Mammary epithelial cell (primary cell): ENCODE measurements at regions of chr22 and their contacts with region 1.

Region 1: GRCh38 chr22:29408945-29409344 is 20.6 kb upstream of the AP1B1 start:
- DNase-seq: no peak
- H3K4me3 ChIP-seq: no peak overlapping the region
- H3K27ac ChIP-seq: no peak overlapping the region
- H3K4me1 ChIP-seq: no peaks in the 10 kb centered on the region
- H3K27me3 ChIP-seq: peaks cover 3% of the 10 kb centered on the region
- CTCF ChIP-seq: no peak

Region 2: GRCh38 chr22:29469755-29470154 is 60.8 kb after region 1 on chr22:
- CTCF ChIA-PET with region 1: no interaction called
- dilution Hi-C with region 1: loop called (anchors 5 kb)
- in situ Hi-C with region 1: no loop called
- intact Hi-C with region 1: no loop called
- DNase-seq: no peak
- H3K4me3 ChIP-seq: peak overlapping the region; percentile 37 to 56 (median 50)
- H3K27ac ChIP-seq: no peak overlapping the region
- H3K4me1 ChIP-seq: peaks cover 18% of the 10 kb centered on the region
- H3K27me3 ChIP-seq: no peaks in the 10 kb centered on the region
- CTCF ChIP-seq: no peak